ENCODE measurements at regions of chr2 and their contacts with region 1.

Region 1: GRCh38 chr2:209322041-209322440 is 101.8 kb upstream of the MAP2 start:
- ATAC-seq: no peak
- H3K4me3 ChIP-seq: no peak overlapping the region
- H3K27ac ChIP-seq: no peak overlapping the region
- H3K4me1 ChIP-seq: no peaks in the 10 kb centered on the region

Region 2: DNA sequence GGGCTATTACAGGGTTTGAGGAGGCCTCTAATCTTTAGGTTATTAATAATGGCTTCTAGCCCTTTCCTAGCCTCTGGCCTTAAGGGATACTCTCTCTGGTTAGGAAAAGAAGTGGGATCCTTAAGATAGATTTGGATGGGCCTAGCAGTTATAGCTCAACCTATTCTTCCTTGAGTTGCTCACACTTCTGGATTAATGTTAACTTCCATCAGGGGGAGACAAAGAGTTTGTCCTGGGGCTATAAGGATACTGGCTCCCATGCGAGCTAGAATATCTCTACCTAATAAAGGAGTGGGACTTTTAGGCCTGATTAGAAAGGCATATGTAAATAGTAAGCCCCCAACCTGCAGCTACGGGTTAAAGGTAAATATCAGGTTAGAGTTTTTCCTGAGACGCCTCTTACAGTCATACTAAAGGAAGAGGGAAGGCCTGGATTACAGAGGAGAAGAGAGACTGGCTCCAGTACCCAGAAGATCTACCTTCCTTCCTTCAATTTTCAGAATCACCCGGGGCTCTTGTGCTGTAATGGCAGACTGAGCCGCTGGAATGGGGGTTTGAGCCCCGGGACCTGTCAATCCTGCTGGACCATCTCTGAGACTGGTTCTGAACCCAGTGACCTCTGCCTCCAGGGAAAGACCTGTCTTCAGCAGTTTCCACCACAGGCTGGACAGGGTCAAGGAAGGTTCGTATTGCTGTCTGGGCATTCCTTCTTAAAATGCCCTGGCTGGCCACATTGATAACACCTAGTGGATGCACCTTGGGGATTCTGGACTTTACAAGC is 929.6 kb before region 1 on chr2:
- in situ Hi-C with region 1: loop called in 1 of 9 experiments (anchors 10 kb)
- ATAC-seq: no peak
- H3K4me3 ChIP-seq: no peak overlapping the region
- H3K27ac ChIP-seq: no peak overlapping the region
- H3K4me1 ChIP-seq: no peaks in the 10 kb centered on the region

Region 3: DNA sequence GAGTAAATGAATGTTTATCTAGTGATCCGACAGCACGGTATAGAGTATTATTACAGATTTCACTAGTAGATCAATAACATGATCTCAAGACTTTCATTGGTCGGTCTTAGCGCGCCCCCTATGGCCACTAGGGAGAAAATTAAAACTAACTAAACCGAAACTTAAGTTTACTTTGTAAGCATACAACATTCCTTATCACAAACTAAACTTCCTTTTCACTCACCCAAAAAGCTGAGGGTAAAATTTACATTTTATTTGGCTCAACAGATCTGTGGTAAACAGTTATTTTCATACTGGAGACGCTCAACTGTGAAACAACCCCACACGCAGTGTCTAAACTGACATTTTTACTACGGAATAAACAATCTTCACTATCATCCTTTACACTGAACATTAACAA is 113.8 kb before region 1 on chr2:
- in situ Hi-C with region 1: no loop called
- ATAC-seq: peak in 2 of 8 experiments; percentile 49
- H3K4me3 ChIP-seq: no peak overlapping the region
- H3K27ac ChIP-seq: no peak overlapping the region
- H3K4me1 ChIP-seq: no peaks in the 10 kb centered on the region

Region 4: GRCh38 chr2:209614690-209615369 is 292.8 kb after region 1 on chr2:
- in situ Hi-C with region 1: no loop called
- ATAC-seq: peak in 5 of 8 experiments; percentile 22 to 73 (median 57)
- H3K4me3 ChIP-seq: no peak overlapping the region
- H3K27ac ChIP-seq: no peak overlapping the region
- H3K4me1 ChIP-seq: peaks cover 18 to 28% of the 10 kb centered on the region in 2 donors

Measured in motor neuron (in vitro differentiated cells).